AG04449 (cell line): ENCODE measurements at regions of chr14 and their contacts with region 1.

Region 1: GRCh38 chr14:101964297-101965144 is at the start of gene DYNC1H1:
- DNase-seq: no peak
- H3K4me3 ChIP-seq: peak within 1 kb of the TSS; percentile 94
- CTCF ChIP-seq: no peak

Region 2: DNA sequence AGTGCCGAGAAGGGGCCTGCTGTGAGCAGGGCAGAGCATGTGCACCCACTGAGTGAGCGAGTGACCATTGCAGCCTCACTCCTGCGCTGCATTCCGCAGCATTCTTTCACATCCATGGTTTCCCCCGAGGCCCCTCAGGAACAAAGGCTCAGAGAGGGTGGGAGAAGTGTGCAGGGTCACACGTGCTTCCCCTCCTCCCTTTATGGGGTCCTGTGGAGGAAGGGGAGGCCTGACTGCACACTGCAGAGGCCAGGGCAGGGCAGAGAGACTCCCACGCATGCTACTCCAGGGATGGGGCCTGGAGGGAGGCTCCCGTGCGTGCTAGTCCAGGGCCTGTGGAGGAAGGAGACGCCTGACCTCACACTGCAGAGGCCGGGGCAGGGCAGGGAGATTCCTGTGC is 340.0 kb before region 1 on chr14:
- CTCF ChIA-PET with region 1: no interaction called
- POLR2A ChIA-PET with region 1: no interaction called
- DNase-seq: no peak
- H3K4me3 ChIP-seq: no peak overlapping the region
- CTCF ChIP-seq: no peak

Region 3: GRCh38 chr14:101947906-101948665 is 16.4 kb before region 1 on chr14:
- CTCF ChIA-PET with region 1: interaction called, 71 read pairs
- POLR2A ChIA-PET with region 1: no interaction called
- DNase-seq: peak; percentile 98
- H3K4me3 ChIP-seq: peak overlapping the region; percentile 98
- CTCF ChIP-seq: no peak

Region 4: GRCh38 chr14:101986953-101987352 is 22.4 kb after region 1 on chr14:
- CTCF ChIA-PET with region 1: interaction called, 17 read pairs
- POLR2A ChIA-PET with region 1: no interaction called
- DNase-seq: no peak
- H3K4me3 ChIP-seq: no peak overlapping the region
- CTCF ChIP-seq: no peak

Region 5: DNA sequence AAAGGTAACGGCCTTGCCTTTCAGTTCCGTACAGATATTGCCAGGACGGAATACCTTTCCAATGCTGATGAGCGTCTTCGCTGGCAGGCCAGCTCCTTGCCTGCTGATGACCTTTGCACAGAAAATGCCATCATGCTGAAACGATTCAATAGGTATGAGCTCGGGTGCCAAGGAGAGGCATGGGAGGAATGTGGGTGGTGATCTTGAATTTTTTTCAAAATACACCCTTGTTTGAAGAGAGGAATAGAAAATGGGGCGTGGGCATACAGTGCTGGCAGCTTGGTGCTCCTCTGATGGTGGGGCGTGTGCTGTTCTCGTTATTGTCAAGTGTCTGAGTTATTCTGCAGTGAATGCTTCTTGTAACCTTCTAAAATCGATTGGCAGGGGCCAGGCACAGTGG is 69.8 kb after region 1 on chr14:
- CTCF ChIA-PET with region 1: interaction called, 37 read pairs
- POLR2A ChIA-PET with region 1: no interaction called
- DNase-seq: no peak
- H3K4me3 ChIP-seq: no peak overlapping the region
- CTCF ChIP-seq: no peak

Region 6: GRCh38 chr14:102086972-102087761 is 122.6 kb after region 1 on chr14 and contains the start of gene HSP90AA1:
- CTCF ChIA-PET with region 1: interaction called, 14 read pairs
- POLR2A ChIA-PET with region 1: no interaction called
- DNase-seq: no peak
- H3K4me3 ChIP-seq: peak within 1 kb of the TSS; percentile 82
- CTCF ChIP-seq: peak; percentile 14